CD8-positive, alpha-beta T cell (primary cell): ENCODE measurements at regions of chr1 and their contacts with region 1.

Region 1: DNA sequence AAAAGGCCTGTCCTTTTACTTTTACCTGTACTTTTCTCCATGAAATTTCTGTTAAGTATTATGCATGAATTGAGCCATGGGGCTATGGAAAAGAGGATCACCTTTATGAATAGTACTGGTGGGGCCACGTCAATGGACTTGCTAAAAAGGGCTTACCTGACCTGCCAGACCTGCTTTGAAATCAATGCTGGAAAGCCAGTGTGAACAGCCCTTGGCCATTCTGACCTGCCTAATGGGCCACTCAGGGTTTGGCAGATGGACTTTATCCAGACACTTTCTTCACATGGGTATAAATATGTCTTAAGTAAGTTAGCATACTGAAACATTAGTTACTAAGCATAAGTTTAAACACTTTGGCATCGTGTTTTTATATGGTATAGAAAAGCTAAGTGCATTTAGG is 8.3 kb upstream of the GUK1 start:
- DNase-seq: no peak
- ATAC-seq: no peak
- H3K4me3 ChIP-seq: no peak overlapping the region
- H3K4me3 Mint-ChIP-seq: no peak overlapping the region
- H3K27ac ChIP-seq: no peak overlapping the region
- H3K27ac Mint-ChIP-seq: no peak overlapping the region
- H3K4me1 ChIP-seq: no peaks in the 10 kb centered on the region
- H3K4me1 Mint-ChIP-seq: peaks cover 13% of the 10 kb centered on the region
- H3K27me3 ChIP-seq: no peaks in the 10 kb centered on the region
- H3K27me3 Mint-ChIP-seq: peaks cover 9% of the 10 kb centered on the region
- CTCF ChIP-seq: no peak

Region 2: DNA sequence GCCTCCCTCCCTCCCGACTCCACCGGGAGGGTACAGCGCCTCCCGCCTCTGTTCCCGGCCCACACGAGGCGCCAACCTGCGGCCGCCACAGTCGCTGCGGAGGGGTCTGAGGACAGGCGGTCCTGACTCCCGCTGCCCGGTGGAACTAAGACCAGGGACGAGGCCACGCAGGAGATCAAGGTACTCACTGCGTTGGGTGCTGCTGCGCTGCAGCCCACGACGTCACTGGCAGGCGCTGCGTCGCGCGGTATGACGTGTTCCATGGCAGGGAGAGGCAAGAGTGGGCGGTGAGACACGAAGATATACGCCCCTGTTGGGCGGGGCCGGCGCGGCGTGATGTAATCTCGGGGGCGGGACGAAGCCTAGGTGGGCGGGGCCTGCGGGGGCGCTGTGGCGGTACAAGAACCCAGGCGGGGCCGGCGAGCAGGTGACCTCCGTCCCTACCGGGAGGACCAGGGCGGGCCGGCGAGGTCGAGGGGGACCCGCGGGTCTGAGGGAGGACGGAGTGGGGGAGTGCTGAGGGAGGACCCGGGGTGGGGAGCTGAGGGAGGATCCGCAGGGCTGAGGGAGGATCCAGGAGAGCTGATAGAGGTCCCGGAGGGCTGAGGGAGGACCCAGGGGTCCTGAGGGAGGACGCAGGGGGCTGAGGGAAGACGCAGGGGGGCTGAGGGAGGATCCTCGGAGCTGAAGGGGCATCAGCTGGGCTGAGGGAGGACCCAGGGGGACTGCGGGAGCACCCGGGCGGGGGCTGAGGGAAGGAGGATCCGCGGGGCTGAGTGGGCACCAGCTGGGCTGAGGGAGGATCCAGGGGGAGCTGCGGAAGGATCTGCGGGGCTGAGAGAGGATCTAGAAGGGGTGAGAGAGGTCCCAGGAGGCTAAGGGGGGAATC is 22.4 kb before region 1 on chr1 and contains the start of gene MRPL55:
- CTCF ChIA-PET with region 1: interaction called, 5 read pairs
- POLR2A ChIA-PET with region 1: interaction called, 5 read pairs
- intact Hi-C with region 1: loop called in 1 of 2 experiments (anchors 1 kb)
- DNase-seq: peak; percentile 97 to 100 (median 98)
- ATAC-seq: peak; percentile 97
- H3K4me3 ChIP-seq: peak within 1 kb of the TSS; percentile 93 to 98
- H3K4me3 Mint-ChIP-seq: peak within 1 kb of the TSS; percentile 95
- H3K27ac ChIP-seq: peak within 1 kb of the TSS; percentile 90 to 94
- H3K27ac Mint-ChIP-seq: peak within 1 kb of the TSS; percentile 96
- H3K4me1 ChIP-seq: peaks cover 21% of the 10 kb centered on the region
- H3K4me1 Mint-ChIP-seq: peaks cover 26% of the 10 kb centered on the region
- H3K27me3 ChIP-seq: no peaks in the 10 kb centered on the region
- H3K27me3 Mint-ChIP-seq: no peaks in the 10 kb centered on the region
- CTCF ChIP-seq: no peak
- total RNA-seq, gene MRPL55: 90.2 to 90.7 TPM

Region 3: DNA sequence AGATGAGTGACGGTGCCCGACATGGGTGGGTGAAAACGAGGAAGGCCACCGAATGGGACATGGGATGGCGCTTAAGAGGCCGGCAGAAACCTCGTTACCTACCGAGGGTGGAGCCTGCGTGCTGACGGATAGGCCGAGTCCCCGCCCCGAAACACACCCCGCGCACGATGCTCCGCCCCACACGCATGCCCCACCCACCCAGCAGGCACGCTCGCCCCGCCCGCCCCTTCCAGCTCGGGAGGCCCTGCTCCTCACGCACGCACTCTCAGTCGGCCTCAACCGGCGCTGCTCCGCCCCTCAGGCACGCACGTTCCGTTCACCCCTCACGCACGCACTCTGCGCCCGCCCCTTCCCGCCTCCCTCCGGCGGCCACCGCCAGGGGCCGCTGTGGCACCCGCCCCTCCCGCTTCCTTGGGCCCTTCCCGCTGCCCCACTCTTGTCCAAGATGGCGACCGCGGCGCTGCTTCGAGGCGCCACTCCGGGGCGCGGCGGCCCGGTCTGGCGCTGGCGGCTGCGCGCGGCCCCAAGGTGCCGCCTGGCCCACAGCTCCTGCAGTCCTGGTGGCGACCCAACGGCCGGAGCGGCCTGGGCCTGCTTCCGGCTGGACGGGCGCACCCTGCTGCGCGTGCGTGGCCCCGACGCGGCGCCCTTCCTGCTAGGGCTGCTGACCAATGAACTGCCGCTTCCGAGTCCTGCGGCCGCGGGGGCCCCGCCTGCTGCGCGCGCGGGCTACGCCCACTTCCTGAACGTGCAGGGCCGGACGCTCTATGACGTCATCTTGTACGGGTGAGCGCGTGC is 33.8 kb after region 1 on chr1 and contains the start of gene IBA57:
- CTCF ChIA-PET with region 1: interaction called, 49 read pairs
- POLR2A ChIA-PET with region 1: interaction called, 25 read pairs
- intact Hi-C with region 1: loop called (anchors 1 kb)
- DNase-seq: peak; percentile 99 to 100 (median 100)
- ATAC-seq: peak; percentile 82
- H3K4me3 ChIP-seq: peak within 1 kb of the TSS; percentile 70 to 92
- H3K4me3 Mint-ChIP-seq: peak within 1 kb of the TSS; percentile 85
- H3K27ac ChIP-seq: peak within 1 kb of the TSS; percentile 94 to 99
- H3K27ac Mint-ChIP-seq: peak within 1 kb of the TSS; percentile 98
- H3K4me1 ChIP-seq: peaks cover 44% of the 10 kb centered on the region
- H3K4me1 Mint-ChIP-seq: peaks cover 52% of the 10 kb centered on the region
- H3K27me3 ChIP-seq: no peaks in the 10 kb centered on the region
- H3K27me3 Mint-ChIP-seq: no peaks in the 10 kb centered on the region
- CTCF ChIP-seq: peak; percentile 68
- total RNA-seq, gene IBA57: 23.5 to 23.8 TPM

Region 4: GRCh38 chr1:228212966-228213844 is 81.4 kb after region 1 on chr1:
- CTCF ChIA-PET with region 1: interaction called, 8 read pairs
- POLR2A ChIA-PET with region 1: interaction called, 3 read pairs
- intact Hi-C with region 1: loop called (anchors 1 to 2 kb)
- DNase-seq: peak; percentile 86 to 93 (median 92)
- ATAC-seq: peak; percentile 89
- H3K4me3 ChIP-seq: peak overlapping the region; percentile 61 to 76
- H3K4me3 Mint-ChIP-seq: peak overlapping the region; percentile 90
- H3K27ac ChIP-seq: peak overlapping the region; percentile 36 to 55
- H3K27ac Mint-ChIP-seq: peak overlapping the region; percentile 93
- H3K4me1 ChIP-seq: peaks cover 13% of the 10 kb centered on the region
- H3K4me1 Mint-ChIP-seq: peaks cover 11% of the 10 kb centered on the region
- H3K27me3 ChIP-seq: peaks cover 0 to 2% of the 10 kb centered on the region in 2 experiments
- H3K27me3 Mint-ChIP-seq: no peaks in the 10 kb centered on the region
- CTCF ChIP-seq: peak; percentile 24

Region 5: DNA sequence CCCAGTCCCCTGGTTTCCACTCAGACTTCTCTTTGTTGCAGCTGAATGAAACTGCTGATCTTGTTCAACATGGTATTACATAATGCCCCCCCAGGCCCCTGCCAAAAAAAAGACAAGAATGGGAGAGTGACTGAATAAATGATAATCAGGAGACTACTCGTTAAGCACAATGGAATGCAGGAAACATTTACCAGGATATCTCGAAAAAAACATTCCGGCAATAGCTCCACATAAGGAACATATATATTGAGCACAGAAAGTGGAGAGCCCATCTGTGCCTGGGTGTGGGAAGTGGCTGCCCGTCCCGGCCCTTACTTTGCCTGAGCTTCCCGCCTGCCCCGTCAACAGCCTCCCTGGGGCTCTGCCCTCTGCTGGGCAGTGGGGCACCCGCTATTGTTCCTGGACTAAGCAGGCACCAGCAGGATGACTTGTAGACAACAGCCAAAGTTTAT is 261.5 kb after region 1 on chr1:
- CTCF ChIA-PET with region 1: interaction called, 4 read pairs
- POLR2A ChIA-PET with region 1: no interaction called
- intact Hi-C with region 1: loop called in 1 of 2 experiments (anchors 2 kb)
- DNase-seq: peak in 1 of 9 experiments; percentile 22
- ATAC-seq: no peak
- H3K4me3 ChIP-seq: no peak overlapping the region
- H3K4me3 Mint-ChIP-seq: no peak overlapping the region
- H3K27ac ChIP-seq: no peak overlapping the region
- H3K27ac Mint-ChIP-seq: peak overlapping the region; percentile 37
- H3K4me1 ChIP-seq: no peaks in the 10 kb centered on the region
- H3K4me1 Mint-ChIP-seq: peaks cover 8% of the 10 kb centered on the region
- H3K27me3 ChIP-seq: no peaks in the 10 kb centered on the region
- H3K27me3 Mint-ChIP-seq: no peaks in the 10 kb centered on the region
- CTCF ChIP-seq: no peak

Region 6: DNA sequence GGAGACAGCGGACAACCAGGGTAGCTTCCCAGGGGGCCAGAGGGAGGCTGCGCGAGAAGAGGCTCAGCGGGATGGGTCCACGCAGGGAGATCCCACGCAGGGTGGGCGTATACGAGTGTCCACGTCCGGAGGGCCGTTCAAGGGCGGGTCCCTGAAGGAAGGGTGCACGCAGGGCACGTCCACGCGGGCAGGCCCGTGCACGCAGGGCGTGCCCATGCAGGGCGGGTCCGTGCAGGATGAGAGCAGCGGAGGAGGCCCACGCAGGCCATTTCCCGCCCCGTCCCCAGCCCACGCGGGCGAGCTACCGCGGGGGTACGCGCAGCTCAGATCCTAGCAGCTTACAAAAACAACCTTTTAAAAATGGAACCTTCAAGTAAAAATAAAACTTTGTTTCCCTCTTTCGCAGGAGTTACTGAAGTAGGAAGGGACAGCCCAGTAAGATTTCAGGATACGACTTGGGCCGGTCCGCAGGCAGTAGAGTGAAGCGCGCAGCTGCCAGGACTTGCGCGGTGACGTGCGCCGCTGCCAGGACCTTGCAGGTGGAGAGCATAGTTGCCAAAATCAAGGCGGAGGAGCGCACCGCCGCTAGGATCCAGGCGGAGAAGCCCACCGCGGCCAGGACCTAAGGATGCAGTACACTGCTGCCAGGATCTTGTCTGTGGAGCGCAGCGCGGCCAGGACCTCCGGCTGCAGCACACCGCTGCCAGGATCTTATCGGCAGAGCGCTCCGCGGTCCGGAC is 355.0 kb after region 1 on chr1:
- CTCF ChIA-PET with region 1: no interaction called
- POLR2A ChIA-PET with region 1: no interaction called
- intact Hi-C with region 1: loop called (anchors 1 to 10 kb)
- DNase-seq: peak; percentile 66 to 94 (median 77)
- ATAC-seq: peak; percentile 75
- H3K4me3 ChIP-seq: peak overlapping the region; percentile 88 to 90
- H3K4me3 Mint-ChIP-seq: peak overlapping the region; percentile 98
- H3K27ac ChIP-seq: peak overlapping the region; percentile 100
- H3K27ac Mint-ChIP-seq: peak overlapping the region; percentile 100
- H3K4me1 ChIP-seq: peaks cover 31% of the 10 kb centered on the region
- H3K4me1 Mint-ChIP-seq: peaks cover 37% of the 10 kb centered on the region
- H3K27me3 ChIP-seq: no peaks in the 10 kb centered on the region
- H3K27me3 Mint-ChIP-seq: no peaks in the 10 kb centered on the region
- CTCF ChIP-seq: no peak

Region 7: GRCh38 chr1:228515200-228515834 is 383.6 kb after region 1 on chr1:
- CTCF ChIA-PET with region 1: interaction called, 33 read pairs
- POLR2A ChIA-PET with region 1: no interaction called
- intact Hi-C with region 1: loop called in 1 of 2 experiments (anchors 1 kb)
- DNase-seq: peak in 7 of 9 experiments; percentile 7 to 76 (median 33)
- ATAC-seq: peak; percentile 52
- H3K4me3 ChIP-seq: no peak overlapping the region
- H3K4me3 Mint-ChIP-seq: no peak overlapping the region
- H3K27ac ChIP-seq: no peak overlapping the region
- H3K27ac Mint-ChIP-seq: no peak overlapping the region
- H3K4me1 ChIP-seq: peaks cover 11% of the 10 kb centered on the region
- H3K4me1 Mint-ChIP-seq: peaks cover 15% of the 10 kb centered on the region
- H3K27me3 ChIP-seq: no peaks in the 10 kb centered on the region
- H3K27me3 Mint-ChIP-seq: peaks cover 10% of the 10 kb centered on the region
- CTCF ChIP-seq: peak; percentile 93